Caco-2 (cell line): ENCODE measurements at regions of chr10 and their contacts with region 1.

Region 1: DNA sequence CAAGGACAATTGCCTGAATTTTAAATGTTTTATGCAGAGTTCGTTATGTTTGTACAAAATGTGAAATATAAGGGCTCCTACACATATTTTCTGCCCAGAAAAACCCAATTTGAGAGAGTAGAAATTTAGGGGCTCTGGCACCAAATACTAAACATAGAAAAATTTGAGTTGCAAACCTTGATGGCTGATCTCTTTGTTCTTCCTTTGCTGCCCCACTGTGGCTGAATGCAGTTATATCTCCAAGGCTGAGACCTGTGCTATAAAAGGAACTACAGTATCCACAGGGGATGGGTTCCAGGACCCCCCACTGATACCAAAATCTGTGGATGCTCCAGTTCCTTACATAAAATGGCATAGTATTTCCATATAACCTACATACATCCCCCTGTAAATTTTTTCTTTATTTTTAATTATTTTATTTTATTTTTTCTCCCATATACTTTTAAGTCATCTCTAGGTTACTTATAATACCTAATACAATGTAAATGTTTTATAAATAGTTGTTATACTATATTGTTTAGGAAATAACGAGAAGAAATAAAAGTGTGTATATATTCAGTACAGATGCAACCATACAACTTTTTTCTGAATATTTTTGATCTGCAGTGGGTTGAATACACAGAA is 22.5 kb downstream of the CFAP43 start:
- DNase-seq: peak in 1 of 2 experiments; percentile 54
- H3K4me3 ChIP-seq: no peak overlapping the region
- H3K4me3 Mint-ChIP-seq: no peak overlapping the region
- H3K27ac Mint-ChIP-seq: no peak overlapping the region
- H3K4me1 ChIP-seq: no peaks in the 10 kb centered on the region
- H3K4me1 Mint-ChIP-seq: no peaks in the 10 kb centered on the region
- H3K27me3 ChIP-seq: no peaks in the 10 kb centered on the region
- H3K27me3 Mint-ChIP-seq: no peaks in the 10 kb centered on the region
- CTCF ChIP-seq: peak; percentile 75 to 76

Region 2: DNA sequence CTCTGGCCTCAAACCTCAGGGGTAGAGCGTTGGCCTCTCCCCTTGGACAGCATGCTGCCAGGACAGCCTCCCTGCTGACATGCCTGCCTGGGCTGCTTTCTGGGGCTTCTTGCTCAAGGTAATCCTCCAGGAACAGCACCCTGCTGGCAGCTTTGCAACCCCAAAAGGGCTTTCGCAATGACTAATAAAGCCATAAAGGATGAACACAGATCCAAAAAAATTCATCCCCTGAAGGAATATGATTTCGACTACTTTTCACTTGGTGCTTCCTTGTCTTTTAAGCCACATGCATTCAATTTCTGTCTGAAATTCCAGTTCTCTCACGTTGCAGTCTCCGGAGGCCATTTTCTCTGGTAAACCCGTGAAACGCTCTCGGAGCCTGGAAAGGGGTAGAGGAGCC is 339.2 kb before region 1 on chr10:
- CTCF ChIA-PET with region 1: no interaction called
- POLR2A ChIA-PET with region 1: no interaction called
- intact Hi-C with region 1: no loop called
- DNase-seq: peak in 1 of 2 experiments; percentile 31
- H3K4me3 ChIP-seq: no peak overlapping the region
- H3K4me3 Mint-ChIP-seq: no peak overlapping the region
- H3K27ac Mint-ChIP-seq: no peak overlapping the region
- H3K4me1 ChIP-seq: no peaks in the 10 kb centered on the region
- H3K4me1 Mint-ChIP-seq: peaks cover 12% of the 10 kb centered on the region
- H3K27me3 ChIP-seq: no peaks in the 10 kb centered on the region
- H3K27me3 Mint-ChIP-seq: no peaks in the 10 kb centered on the region
- CTCF ChIP-seq: no peak

Region 3: GRCh38 chr10:103983367-103983911 is 226.2 kb before region 1 on chr10:
- CTCF ChIA-PET with region 1: no interaction called
- POLR2A ChIA-PET with region 1: no interaction called
- intact Hi-C with region 1: loop called (anchors 10 kb)
- DNase-seq: no peak
- H3K4me3 ChIP-seq: no peak overlapping the region
- H3K4me3 Mint-ChIP-seq: no peak overlapping the region
- H3K27ac Mint-ChIP-seq: no peak overlapping the region
- H3K4me1 ChIP-seq: peaks cover 10% of the 10 kb centered on the region
- H3K4me1 Mint-ChIP-seq: peaks cover 7% of the 10 kb centered on the region
- H3K27me3 ChIP-seq: no peaks in the 10 kb centered on the region
- H3K27me3 Mint-ChIP-seq: no peaks in the 10 kb centered on the region
- CTCF ChIP-seq: no peak

Region 4: GRCh38 chr10:104139221-104139620 is 70.5 kb before region 1 on chr10:
- CTCF ChIA-PET with region 1: no interaction called
- POLR2A ChIA-PET with region 1: no interaction called
- intact Hi-C with region 1: loop called (anchors 5 kb)
- DNase-seq: no peak
- H3K4me3 ChIP-seq: no peak overlapping the region
- H3K4me3 Mint-ChIP-seq: no peak overlapping the region
- H3K27ac Mint-ChIP-seq: no peak overlapping the region
- H3K4me1 ChIP-seq: no peaks in the 10 kb centered on the region
- H3K4me1 Mint-ChIP-seq: no peaks in the 10 kb centered on the region
- H3K27me3 ChIP-seq: no peaks in the 10 kb centered on the region
- H3K27me3 Mint-ChIP-seq: peaks cover 10% of the 10 kb centered on the region
- CTCF ChIP-seq: peak; percentile 29 to 41